ENCODE measurements at regions of chr15 and their contacts with region 1.

Region 1: GRCh38 chr15:83983634-83984458 is 251.7 kb upstream of the GOLGA6L4 start:
- DNase-seq: no peak
- H3K4me3 ChIP-seq: no peak overlapping the region
- H3K27ac ChIP-seq: no peak overlapping the region
- H3K4me1 ChIP-seq: no peaks in the 10 kb centered on the region
- H3K27me3 ChIP-seq: no peaks in the 10 kb centered on the region
- CTCF ChIP-seq: no peak

Region 2: DNA sequence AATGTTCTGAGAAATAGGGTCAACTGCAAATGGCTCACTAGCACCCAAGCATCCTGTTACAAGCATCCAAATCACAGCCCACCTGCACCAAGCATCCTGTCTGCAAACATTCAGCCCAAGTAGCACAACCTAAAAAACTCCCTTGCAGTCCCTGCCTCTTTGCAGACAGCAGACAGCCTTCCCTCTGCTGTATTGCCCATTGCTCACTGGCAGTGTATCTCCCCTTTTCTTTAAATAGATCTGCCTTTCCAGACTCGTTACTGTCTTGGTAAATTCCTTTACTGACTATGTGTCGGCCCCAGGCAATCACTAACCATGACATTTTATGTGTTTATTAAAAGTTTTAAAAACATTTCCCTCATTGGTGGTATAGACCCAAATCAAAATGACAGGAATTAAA is 174.5 kb before region 1 on chr15:
- CTCF ChIA-PET with region 1: no interaction called
- dilution Hi-C with region 1: no loop called
- in situ Hi-C with region 1: no loop called
- intact Hi-C with region 1: loop called (anchors 10 kb)
- DNase-seq: peak; percentile 50
- H3K4me3 ChIP-seq: no peak overlapping the region
- H3K27ac ChIP-seq: no peak overlapping the region
- H3K4me1 ChIP-seq: peaks cover 7% of the 10 kb centered on the region
- H3K27me3 ChIP-seq: no peaks in the 10 kb centered on the region
- CTCF ChIP-seq: no peak

Region 3: GRCh38 chr15:83955806-83956265 is 28.0 kb before region 1 on chr15:
- CTCF ChIA-PET with region 1: no interaction called
- dilution Hi-C with region 1: no loop called
- in situ Hi-C with region 1: no loop called
- intact Hi-C with region 1: no loop called
- DNase-seq: no peak
- H3K4me3 ChIP-seq: no peak overlapping the region
- H3K27ac ChIP-seq: no peak overlapping the region
- H3K4me1 ChIP-seq: peaks cover 7% of the 10 kb centered on the region
- H3K27me3 ChIP-seq: no peaks in the 10 kb centered on the region
- CTCF ChIP-seq: no peak

Measured in mammary epithelial cell (primary cell).